IMR-90 (cell line): ENCODE measurements at regions of chr9 and their contacts with region 1.

Region 1: GRCh38 chr9:98315551-98316060 is 60.2 kb upstream of the TBC1D2 start:
- DNase-seq: peak; percentile 89
- ATAC-seq: peak; percentile 81
- H3K4me3 ChIP-seq: no peak overlapping the region
- H3K27ac ChIP-seq: no peak overlapping the region
- H3K4me1 ChIP-seq: peaks cover 23% of the 10 kb centered on the region
- H3K27me3 ChIP-seq: no peaks in the 10 kb centered on the region
- CTCF ChIP-seq: peak; percentile 98
- POLR2A ChIP-seq: peak; percentile 48; the same call in 1 of the 2 replicates
- RAD21 ChIP-seq: peak; percentile 100

Region 2: GRCh38 chr9:98410185-98410697 is 94.6 kb after region 1 on chr9:
- CTCF ChIA-PET with region 1: interaction called, 3 read pairs
- POLR2A ChIA-PET with region 1: no interaction called
- dilution Hi-C with region 1: no loop called
- in situ Hi-C with region 1: no loop called
- intact Hi-C with region 1: loop called (anchors 5 kb)
- DNase-seq: peak; percentile 80
- ATAC-seq: peak; percentile 92
- H3K4me3 ChIP-seq: no peak overlapping the region
- H3K27ac ChIP-seq: no peak overlapping the region
- H3K4me1 ChIP-seq: 0 out of 2 replicates have a peak, but pooled peaks cover 1% of the 10 kb centered on the region
- H3K27me3 ChIP-seq: no peaks in the 10 kb centered on the region; the same call in 1 of the 2 replicates
- CTCF ChIP-seq: peak; percentile 33
- POLR2A ChIP-seq: no peak
- RAD21 ChIP-seq: peak; percentile 33

Region 3: DNA sequence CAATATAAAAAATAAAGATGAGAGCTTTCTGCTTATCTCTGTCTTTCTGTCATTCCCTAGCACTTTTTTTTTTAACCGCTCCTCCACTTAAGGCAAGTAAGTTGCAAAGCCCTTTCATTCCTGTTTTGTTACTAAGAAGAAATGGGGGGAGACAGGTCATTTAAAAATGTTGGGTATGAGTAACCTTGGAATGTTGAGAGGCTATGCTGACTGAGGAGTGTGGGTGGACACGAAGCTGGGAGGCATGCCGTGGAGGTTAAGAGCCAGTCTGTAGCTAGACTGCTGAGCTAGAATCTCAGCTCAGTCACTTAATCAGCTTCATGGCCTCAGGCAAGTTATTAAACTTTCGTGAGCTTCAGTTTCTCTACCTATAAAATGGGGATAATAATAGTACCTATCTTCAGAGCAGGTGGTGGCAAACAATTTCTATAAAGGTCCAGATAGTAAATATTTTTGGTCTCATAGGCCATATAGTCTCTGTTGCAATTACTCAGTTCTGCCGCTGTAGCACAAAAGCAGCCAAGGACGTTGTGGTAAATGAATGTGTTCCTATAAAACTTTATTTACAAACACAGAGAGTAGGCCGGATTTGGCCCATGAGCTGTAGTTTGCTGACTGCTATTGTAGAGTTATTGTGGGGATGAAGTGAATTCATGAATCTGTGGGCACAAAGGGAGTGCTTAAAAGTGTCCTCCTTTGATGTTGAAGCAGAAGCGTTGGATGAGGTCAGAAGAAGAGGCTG is 173.1 kb after region 1 on chr9:
- CTCF ChIA-PET with region 1: interaction called, 6 read pairs
- POLR2A ChIA-PET with region 1: no interaction called
- dilution Hi-C with region 1: no loop called
- in situ Hi-C with region 1: no loop called
- intact Hi-C with region 1: loop called (anchors 2 kb)
- DNase-seq: peak; percentile 98
- ATAC-seq: peak; percentile 96
- H3K4me3 ChIP-seq: no peak overlapping the region
- H3K27ac ChIP-seq: peak overlapping the region; percentile 82
- H3K4me1 ChIP-seq: peaks cover 25% of the 10 kb centered on the region
- H3K27me3 ChIP-seq: no peaks in the 10 kb centered on the region
- CTCF ChIP-seq: peak; percentile 28; the same call in 1 of the 2 replicates
- POLR2A ChIP-seq: peak; percentile 38; the same call in 1 of the 2 replicates
- RAD21 ChIP-seq: no peak

Region 4: DNA sequence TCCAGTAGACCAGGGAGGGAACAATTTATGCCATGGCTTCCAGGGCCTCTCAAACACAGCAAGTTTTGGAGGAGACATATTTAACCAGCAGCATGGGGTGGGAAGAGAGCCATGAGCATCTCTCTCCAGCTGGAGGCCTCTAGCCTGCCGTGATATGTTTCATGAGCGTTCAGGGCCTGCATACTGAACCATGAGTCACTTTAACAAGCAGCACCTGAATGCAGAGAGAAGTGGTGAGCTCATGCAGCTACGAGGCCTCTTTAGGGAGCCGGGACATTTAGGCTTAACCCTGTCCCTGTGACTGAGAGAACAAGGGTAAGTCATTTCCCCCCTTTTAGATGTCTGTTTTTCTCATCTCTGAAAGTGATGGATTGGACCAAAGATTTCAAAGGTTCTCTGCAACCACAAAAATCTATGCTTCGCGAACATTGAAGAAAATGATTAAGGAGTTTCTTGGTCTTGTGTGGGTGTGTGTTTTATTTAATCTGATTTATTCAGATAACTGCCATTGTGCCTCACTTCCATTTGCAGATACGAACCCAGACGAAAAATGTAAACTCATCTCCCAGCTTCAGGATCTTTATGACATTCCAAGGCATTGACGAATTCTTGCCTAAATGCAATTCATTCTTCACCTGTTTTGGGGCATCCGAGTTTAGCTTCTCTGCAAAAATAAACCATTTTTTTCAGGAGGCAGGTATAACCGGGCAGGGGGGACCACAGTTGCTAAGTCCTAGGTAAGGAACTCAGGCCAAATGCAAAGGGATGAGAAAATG is 236.1 kb after region 1 on chr9:
- CTCF ChIA-PET with region 1: interaction called, 3 read pairs
- POLR2A ChIA-PET with region 1: no interaction called
- dilution Hi-C with region 1: no loop called
- in situ Hi-C with region 1: no loop called
- intact Hi-C with region 1: loop called (anchors 10 kb)
- DNase-seq: peak; percentile 97
- ATAC-seq: peak; percentile 88
- H3K4me3 ChIP-seq: no peak overlapping the region
- H3K27ac ChIP-seq: peak overlapping the region; percentile 47
- H3K4me1 ChIP-seq: peaks cover 24% of the 10 kb centered on the region
- H3K27me3 ChIP-seq: no peaks in the 10 kb centered on the region
- CTCF ChIP-seq: peak; percentile 16; the same call in 1 of the 2 replicates
- POLR2A ChIP-seq: no peak
- RAD21 ChIP-seq: no peak; the same call in 1 of the 2 replicates

Region 5: DNA sequence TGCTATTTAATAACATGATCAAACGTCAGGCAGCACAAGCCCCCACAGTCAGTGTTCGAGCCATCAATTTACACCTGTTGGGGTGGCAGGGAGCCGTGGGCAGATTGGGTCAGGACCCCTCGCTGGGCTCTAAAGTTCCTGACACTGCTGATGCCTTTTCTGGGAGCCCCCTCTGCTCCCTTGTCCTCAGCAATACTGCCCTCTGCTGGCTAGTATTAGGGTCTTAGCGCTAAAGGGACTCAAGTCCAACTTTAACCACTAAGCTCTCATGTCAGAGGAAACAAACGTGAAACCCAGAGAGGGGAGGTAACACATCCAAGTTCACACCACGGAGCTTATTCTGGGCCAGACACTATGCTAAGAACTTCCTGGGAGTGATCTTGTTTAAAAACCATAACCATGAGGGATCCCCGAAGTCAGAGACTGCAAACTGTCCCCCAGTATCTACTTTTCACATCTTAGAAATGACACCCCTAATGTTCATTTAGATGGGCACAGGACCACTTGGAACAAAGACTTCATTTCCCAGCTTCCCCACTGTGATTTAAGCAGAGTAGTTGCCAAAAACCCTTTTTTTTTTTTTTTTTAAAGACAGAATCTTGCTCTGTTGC is 460.3 kb after region 1 on chr9:
- CTCF ChIA-PET with region 1: interaction called, 20 read pairs
- POLR2A ChIA-PET with region 1: no interaction called
- dilution Hi-C with region 1: no loop called
- in situ Hi-C with region 1: loop called (anchors 5 kb)
- intact Hi-C with region 1: loop called (anchors 1 kb)
- DNase-seq: peak; percentile 79
- ATAC-seq: peak; percentile 79
- H3K4me3 ChIP-seq: no peak overlapping the region
- H3K27ac ChIP-seq: no peak overlapping the region
- H3K4me1 ChIP-seq: 0 out of 2 replicates have a peak, but pooled peaks cover 1% of the 10 kb centered on the region
- H3K27me3 ChIP-seq: no peaks in the 10 kb centered on the region
- CTCF ChIP-seq: peak; percentile 86
- POLR2A ChIP-seq: no peak
- RAD21 ChIP-seq: peak; percentile 90

Region 6: GRCh38 chr9:98791147-98792095 is 475.8 kb after region 1 on chr9:
- CTCF ChIA-PET with region 1: interaction called, 3 read pairs
- POLR2A ChIA-PET with region 1: no interaction called
- dilution Hi-C with region 1: no loop called
- in situ Hi-C with region 1: no loop called
- intact Hi-C with region 1: loop called (anchors 5 kb)
- DNase-seq: peak; percentile 94
- ATAC-seq: peak; percentile 89
- H3K4me3 ChIP-seq: no peak overlapping the region
- H3K27ac ChIP-seq: no peak overlapping the region
- H3K4me1 ChIP-seq: peaks cover 9% of the 10 kb centered on the region
- H3K27me3 ChIP-seq: no peaks in the 10 kb centered on the region
- CTCF ChIP-seq: peak; percentile 98
- POLR2A ChIP-seq: no peak
- RAD21 ChIP-seq: peak; percentile 74

Region 7: GRCh38 chr9:98848450-98849149 is 533.0 kb after region 1 on chr9:
- CTCF ChIA-PET with region 1: no interaction called
- POLR2A ChIA-PET with region 1: no interaction called
- dilution Hi-C with region 1: no loop called
- in situ Hi-C with region 1: no loop called
- intact Hi-C with region 1: loop called (anchors 2 kb)
- DNase-seq: peak; percentile 98
- ATAC-seq: peak; percentile 99
- H3K4me3 ChIP-seq: peak overlapping the region; percentile 2; the same call in 1 of the 2 replicates
- H3K27ac ChIP-seq: peak overlapping the region; percentile 15; the same call in 1 of the 2 replicates
- H3K4me1 ChIP-seq: peaks cover 9% of the 10 kb centered on the region
- H3K27me3 ChIP-seq: peaks cover 6% of the 10 kb centered on the region; the same call in 1 of the 2 replicates
- CTCF ChIP-seq: peak; percentile 93
- POLR2A ChIP-seq: no peak
- RAD21 ChIP-seq: peak; percentile 94